ENCODE measurements at regions of chr20 and their contacts with region 1.

Region 1: GRCh38 chr20:10412591-10413408 is 21.2 kb downstream of the MKKS start:
- DNase-seq: peak; percentile 37
- H3K4me3 ChIP-seq: no peak overlapping the region
- H3K27ac ChIP-seq: no peak overlapping the region
- H3K4me1 ChIP-seq: peaks cover 20% of the 10 kb centered on the region
- H3K27me3 ChIP-seq: no peaks in the 10 kb centered on the region
- CTCF ChIP-seq: peak in 1 of 2 donors; percentile 7
- POLR2A ChIP-seq: no peak

Region 2: DNA sequence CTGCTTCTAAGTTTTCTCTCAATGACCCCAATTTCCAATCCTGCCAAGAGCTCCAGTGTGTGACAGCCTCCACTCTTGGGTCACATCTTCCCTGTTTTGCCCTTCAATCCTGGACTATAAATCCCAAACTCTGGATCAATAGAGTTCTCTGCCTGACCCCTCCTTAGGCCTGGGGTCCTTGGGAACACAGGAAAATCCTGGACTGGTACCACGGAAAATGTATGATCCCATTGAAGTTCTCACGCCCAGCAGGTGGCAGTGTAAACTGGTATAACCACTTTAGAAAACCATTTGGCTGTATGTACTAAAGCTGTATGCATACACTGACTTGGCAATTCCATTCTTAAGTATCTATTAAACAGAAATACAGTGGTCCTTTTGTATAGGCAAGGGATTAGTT is 96.2 kb before region 1 on chr20:
- CTCF ChIA-PET with region 1: interaction called, 11 read pairs
- POLR2A ChIA-PET with region 1: no interaction called
- dilution Hi-C with region 1: no loop called
- intact Hi-C with region 1: no loop called
- DNase-seq: peak; percentile 35
- H3K4me3 ChIP-seq: no peak overlapping the region
- H3K27ac ChIP-seq: no peak overlapping the region
- H3K4me1 ChIP-seq: no peaks in the 10 kb centered on the region
- H3K27me3 ChIP-seq: no peaks in the 10 kb centered on the region
- CTCF ChIP-seq: peak; percentile 14 to 37
- POLR2A ChIP-seq: no peak

Region 3: DNA sequence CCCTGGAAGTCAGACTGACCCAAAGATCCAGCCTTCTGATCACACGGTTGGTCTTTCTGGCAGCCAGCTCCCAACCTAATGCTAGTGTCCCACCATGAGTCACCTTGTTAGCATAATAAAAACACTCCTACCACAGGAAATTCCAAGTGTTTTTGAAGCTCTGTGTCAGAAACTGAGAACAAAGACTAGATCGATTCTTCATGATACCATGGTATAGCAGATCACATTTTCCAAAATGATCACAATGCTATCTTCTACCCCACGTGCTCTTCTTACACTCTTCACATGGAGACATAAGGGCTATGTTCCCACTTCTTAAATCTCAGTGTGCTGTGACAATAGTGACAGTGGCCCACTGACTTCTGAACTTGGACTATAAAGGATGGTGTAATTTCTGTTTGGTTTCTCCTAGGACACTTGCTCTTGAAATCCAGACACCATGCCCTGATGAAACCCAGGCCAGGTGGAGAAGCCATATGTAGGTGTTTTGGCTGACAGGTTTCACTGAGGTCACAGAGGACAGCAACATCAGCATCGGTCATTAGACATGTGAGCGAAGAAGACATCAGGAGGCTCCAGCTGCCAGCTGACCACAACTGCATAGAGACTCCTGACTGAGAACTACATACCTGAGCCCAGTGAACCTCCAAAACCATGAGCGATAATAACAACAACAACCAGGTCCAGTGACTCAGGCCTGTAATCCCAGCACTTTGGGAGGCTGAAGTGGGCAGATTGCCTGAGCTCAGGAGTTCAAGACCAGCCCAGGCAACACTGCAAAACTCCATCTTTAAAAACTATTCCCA is 36.3 kb before region 1 on chr20:
- CTCF ChIA-PET with region 1: interaction called, 8 read pairs
- POLR2A ChIA-PET with region 1: no interaction called
- dilution Hi-C with region 1: no loop called
- intact Hi-C with region 1: loop called (anchors 2 kb)
- DNase-seq: peak; percentile 84
- H3K4me3 ChIP-seq: no peak overlapping the region
- H3K27ac ChIP-seq: peak overlapping the region; percentile 74
- H3K4me1 ChIP-seq: peaks cover 17% of the 10 kb centered on the region
- H3K27me3 ChIP-seq: no peaks in the 10 kb centered on the region
- CTCF ChIP-seq: no peak
- POLR2A ChIP-seq: peak; percentile 26